Mammary epithelial cell (primary cell): ENCODE measurements at regions of chr12 and their contacts with region 1.

Region 1: GRCh38 chr12:118189741-118190191 is 53.8 kb downstream of the PEBP1 start:
- DNase-seq: peak; percentile 32
- H3K4me3 ChIP-seq: peak overlapping the region; percentile 31 to 44 (median 34)
- H3K27ac ChIP-seq: peak overlapping the region; percentile 66
- H3K4me1 ChIP-seq: peaks cover 34% of the 10 kb centered on the region
- H3K27me3 ChIP-seq: no peaks in the 10 kb centered on the region
- CTCF ChIP-seq: no peak

Region 2: DNA sequence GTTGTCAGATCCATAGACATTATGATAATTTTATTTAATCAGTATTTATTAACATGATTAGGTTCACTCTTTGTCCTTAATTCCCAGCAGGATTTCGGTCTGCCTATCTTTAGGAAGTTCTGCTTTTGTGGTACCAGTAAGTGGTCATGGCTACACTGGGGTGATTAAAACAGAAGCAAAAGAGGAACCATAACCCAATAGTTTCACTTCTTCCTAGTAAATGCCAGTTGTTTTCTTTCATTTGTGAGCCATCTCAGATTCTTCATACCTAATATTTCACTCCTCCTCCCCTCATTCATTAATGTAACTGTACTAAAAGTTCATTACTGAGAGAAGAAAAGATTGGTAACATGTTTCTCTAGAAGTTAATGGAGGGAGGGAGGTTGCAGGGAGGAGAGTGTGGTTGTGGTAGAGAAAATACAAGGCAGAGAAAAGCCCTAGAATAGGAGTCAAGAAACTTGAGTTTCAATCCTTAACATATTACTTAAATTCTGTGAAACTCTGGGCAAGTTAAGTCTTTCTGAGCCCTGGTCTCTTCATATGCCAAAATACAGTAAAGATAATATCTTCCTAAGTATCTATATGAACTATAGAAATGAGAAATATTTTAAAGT is 47.4 kb after region 1 on chr12:
- CTCF ChIA-PET with region 1: no interaction called
- dilution Hi-C with region 1: no loop called
- in situ Hi-C with region 1: no loop called
- intact Hi-C with region 1: loop called (anchors 5 kb)
- DNase-seq: no peak
- H3K4me3 ChIP-seq: no peak overlapping the region
- H3K27ac ChIP-seq: peak overlapping the region; percentile 67
- H3K4me1 ChIP-seq: peaks cover 23% of the 10 kb centered on the region
- H3K27me3 ChIP-seq: no peaks in the 10 kb centered on the region
- CTCF ChIP-seq: no peak

Region 3: DNA sequence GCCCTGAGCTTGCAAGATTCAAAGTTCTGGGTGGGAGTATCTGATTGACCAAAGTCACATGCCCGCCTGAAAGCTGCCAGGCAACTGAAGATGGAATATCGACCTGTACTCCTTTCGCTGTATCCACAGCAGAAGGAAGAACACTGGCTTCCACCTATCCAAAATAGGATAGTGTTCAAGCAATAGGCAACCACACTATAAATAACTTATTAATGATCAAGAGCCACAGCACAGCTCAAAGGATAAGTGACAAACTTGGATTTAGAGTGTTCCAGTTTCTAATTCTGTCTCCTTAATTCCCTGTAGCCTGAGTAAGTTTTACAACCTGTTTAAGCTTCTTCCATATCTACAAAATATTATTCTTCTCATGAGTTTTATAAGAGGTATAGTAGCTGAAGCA is 93.0 kb after region 1 on chr12:
- CTCF ChIA-PET with region 1: no interaction called
- dilution Hi-C with region 1: no loop called
- in situ Hi-C with region 1: no loop called
- intact Hi-C with region 1: no loop called
- DNase-seq: no peak
- H3K4me3 ChIP-seq: no peak overlapping the region
- H3K27ac ChIP-seq: no peak overlapping the region
- H3K4me1 ChIP-seq: no peaks in the 10 kb centered on the region
- H3K27me3 ChIP-seq: no peaks in the 10 kb centered on the region
- CTCF ChIP-seq: no peak